Left lung (tissue), 14 donors: ENCODE measurements at regions of chr1 and their contacts with region 1.

Region 1: DNA sequence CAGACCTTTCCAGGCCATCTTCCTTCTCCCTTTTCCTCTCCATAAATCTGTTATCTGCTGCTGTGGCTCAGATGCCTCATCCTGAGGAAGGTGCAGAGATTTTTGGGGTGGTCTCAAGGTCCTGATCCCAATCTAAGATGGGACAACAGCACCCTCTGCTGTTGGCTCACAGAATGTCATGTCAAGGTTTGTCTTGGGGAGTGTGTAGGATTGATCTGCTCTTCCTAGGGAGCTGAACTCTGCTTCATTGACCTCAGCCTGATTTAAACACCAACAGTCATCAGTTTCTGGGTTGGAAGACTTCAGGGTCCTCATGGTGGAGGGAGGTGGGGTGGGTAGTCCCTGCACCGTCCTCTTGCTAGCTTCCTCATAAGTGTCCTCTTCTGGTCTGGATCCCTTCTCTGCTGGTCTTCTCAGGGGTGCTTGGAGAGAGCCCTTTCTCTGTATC is 62.8 kb upstream of the LAX1 start:
- DNase-seq: peak in 2 of 4 donors; percentile 48 to 73
- ATAC-seq: peak; percentile 78
- H3K4me3 ChIP-seq: no peak overlapping the region
- H3K27ac ChIP-seq: no peak overlapping the region
- H3K4me1 ChIP-seq: peaks cover 0 to 9% of the 10 kb centered on the region in 2 donors
- H3K27me3 ChIP-seq: no peaks in the 10 kb centered on the region
- CTCF ChIP-seq: peak; percentile 75 to 76

Region 2: DNA sequence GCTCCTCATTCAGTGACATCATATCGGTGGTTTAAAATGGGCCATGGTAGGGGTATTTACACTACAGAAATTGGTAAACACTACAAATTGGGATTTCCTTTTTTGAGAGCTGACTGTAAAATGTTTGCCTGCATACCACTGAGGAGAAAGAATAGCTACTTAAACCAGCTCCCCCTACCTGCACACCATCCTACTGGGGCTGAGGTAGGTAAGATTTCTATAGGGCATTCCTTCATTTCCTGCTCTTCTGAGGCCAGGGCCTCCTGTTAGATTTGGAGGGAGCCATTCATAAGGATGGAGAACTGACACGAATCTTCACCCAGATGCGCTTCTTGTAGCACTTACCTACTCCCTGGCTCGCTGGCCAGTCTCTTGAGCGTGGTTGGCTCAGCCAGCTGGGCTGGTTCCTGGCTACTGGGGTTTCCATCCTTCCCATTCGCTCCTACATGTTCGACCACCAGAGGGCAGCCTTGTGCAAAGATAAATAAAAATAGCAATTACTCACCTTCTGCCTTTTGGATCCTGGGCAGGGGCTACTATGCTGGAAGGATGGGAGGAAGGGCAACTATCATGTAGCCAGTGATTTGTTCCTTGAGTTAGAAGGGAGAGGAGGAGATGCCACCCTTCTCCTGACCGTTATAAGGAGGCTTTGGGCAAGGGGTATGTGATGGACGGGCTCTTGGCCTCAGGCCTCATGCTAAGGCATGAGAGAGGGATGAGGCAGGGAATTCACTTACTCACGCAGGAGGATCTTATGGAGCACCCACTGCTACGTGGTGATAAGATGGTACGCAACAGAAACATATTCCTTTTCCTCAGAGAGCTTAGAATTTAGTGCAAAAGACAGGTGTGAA is 197.5 kb before region 1 on chr1:
- intact Hi-C with region 1: loop called (anchors 2 to 10 kb)
- DNase-seq: peak in 3 of 4 donors; percentile 72 to 83 (median 75)
- ATAC-seq: peak; percentile 92
- H3K4me3 ChIP-seq: no peak overlapping the region
- H3K27ac ChIP-seq: no peak overlapping the region
- H3K4me1 ChIP-seq: peaks cover 10 to 31% of the 10 kb centered on the region in 2 donors
- H3K27me3 ChIP-seq: peaks cover 0 to 10% of the 10 kb centered on the region in 2 donors
- CTCF ChIP-seq: peak; percentile 78 to 96

Region 3: DNA sequence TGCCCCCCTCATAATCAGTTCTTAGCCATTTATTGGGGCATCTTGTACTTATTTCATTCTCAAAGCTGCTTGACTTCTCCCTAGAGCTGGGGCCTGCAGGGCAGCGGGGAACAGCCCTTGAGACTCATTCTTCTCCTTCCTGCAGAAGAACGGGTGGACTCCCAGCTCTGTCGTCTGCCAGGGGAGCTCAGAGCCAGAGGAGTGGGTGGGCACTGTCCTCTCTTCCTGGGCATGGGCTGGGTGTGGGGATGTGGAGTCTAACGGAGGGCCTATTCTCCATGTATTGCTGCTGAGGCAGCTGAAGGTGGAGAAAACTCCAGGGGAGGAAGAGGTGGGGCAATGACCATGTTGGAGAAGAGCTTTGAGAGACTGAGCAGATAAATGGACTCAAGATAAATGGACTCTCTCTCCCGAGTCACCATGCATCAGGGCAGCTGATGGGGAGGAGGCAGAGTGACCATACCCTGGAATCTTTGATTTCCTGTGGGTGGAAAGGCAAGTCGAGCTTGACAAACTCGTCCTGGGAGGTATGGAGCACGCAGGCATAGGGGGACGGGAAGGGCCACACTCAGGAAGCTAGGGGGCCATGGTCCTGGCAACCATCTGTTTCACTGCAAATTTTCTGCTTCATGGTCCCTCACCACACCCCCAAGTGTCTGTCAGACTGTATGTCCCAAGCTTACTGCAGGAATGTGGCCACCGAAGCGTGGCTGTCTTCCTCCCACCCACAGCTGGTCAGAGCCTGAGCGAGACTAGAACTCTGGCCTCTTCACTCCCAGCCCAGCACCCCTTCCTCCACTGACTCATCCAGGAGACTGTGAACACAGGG is 132.4 kb before region 1 on chr1:
- intact Hi-C with region 1: no loop called
- DNase-seq: no peak
- ATAC-seq: no peak
- H3K4me3 ChIP-seq: no peak overlapping the region
- H3K27ac ChIP-seq: no peak overlapping the region
- H3K4me1 ChIP-seq: no peaks in the 10 kb centered on the region
- H3K27me3 ChIP-seq: no peaks in the 10 kb centered on the region
- CTCF ChIP-seq: no peak

Region 4: GRCh38 chr1:203625628-203626019 is 76.5 kb before region 1 on chr1:
- intact Hi-C with region 1: no loop called
- DNase-seq: peak in 2 of 4 donors; percentile 72 to 81
- ATAC-seq: peak; percentile 45
- H3K4me3 ChIP-seq: no peak overlapping the region
- H3K27ac ChIP-seq: peak overlapping the region; percentile 73 to 95
- H3K4me1 ChIP-seq: peaks cover 21 to 37% of the 10 kb centered on the region in 2 donors
- H3K27me3 ChIP-seq: no peaks in the 10 kb centered on the region
- CTCF ChIP-seq: peak in 1 of 2 donors; percentile 24